Caco-2 (cell line): ENCODE measurements at regions of chr4 and their contacts with region 1.

Region 1: GRCh38 chr4:112214390-112215264 is 17.0 kb upstream of the AP1AR start:
- DNase-seq: peak in 1 of 2 experiments; percentile 35
- H3K4me3 ChIP-seq: no peak overlapping the region
- H3K4me3 Mint-ChIP-seq: no peak overlapping the region
- H3K27ac Mint-ChIP-seq: no peak overlapping the region
- H3K4me1 ChIP-seq: no peaks in the 10 kb centered on the region
- H3K4me1 Mint-ChIP-seq: no peaks in the 10 kb centered on the region
- H3K27me3 ChIP-seq: no peaks in the 10 kb centered on the region
- H3K27me3 Mint-ChIP-seq: no peaks in the 10 kb centered on the region
- CTCF ChIP-seq: peak; percentile 44 to 51

Region 2: GRCh38 chr4:112266821-112267220 is 52.2 kb after region 1 on chr4:
- CTCF ChIA-PET with region 1: no interaction called
- POLR2A ChIA-PET with region 1: no interaction called
- intact Hi-C with region 1: loop called (anchors 2 kb)
- DNase-seq: no peak
- H3K4me3 ChIP-seq: no peak overlapping the region
- H3K4me3 Mint-ChIP-seq: no peak overlapping the region
- H3K27ac Mint-ChIP-seq: no peak overlapping the region
- H3K4me1 ChIP-seq: no peaks in the 10 kb centered on the region
- H3K4me1 Mint-ChIP-seq: no peaks in the 10 kb centered on the region
- H3K27me3 ChIP-seq: no peaks in the 10 kb centered on the region
- H3K27me3 Mint-ChIP-seq: no peaks in the 10 kb centered on the region
- CTCF ChIP-seq: peak in 1 of 2 experiments; percentile 30

Region 3: GRCh38 chr4:112813790-112814189 is 599.2 kb after region 1 on chr4:
- CTCF ChIA-PET with region 1: no interaction called
- POLR2A ChIA-PET with region 1: no interaction called
- intact Hi-C with region 1: no loop called
- DNase-seq: no peak
- H3K4me3 ChIP-seq: no peak overlapping the region
- H3K4me3 Mint-ChIP-seq: no peak overlapping the region
- H3K27ac Mint-ChIP-seq: no peak overlapping the region
- H3K4me1 ChIP-seq: 0 out of 2 replicates have a peak, but pooled peaks cover 6% of the 10 kb centered on the region
- H3K4me1 Mint-ChIP-seq: peaks cover 7% of the 10 kb centered on the region
- H3K27me3 ChIP-seq: no peaks in the 10 kb centered on the region
- H3K27me3 Mint-ChIP-seq: no peaks in the 10 kb centered on the region
- CTCF ChIP-seq: no peak